AG04449 (cell line): ENCODE measurements at regions of chr6 and their contacts with region 1.

Region 1: DNA sequence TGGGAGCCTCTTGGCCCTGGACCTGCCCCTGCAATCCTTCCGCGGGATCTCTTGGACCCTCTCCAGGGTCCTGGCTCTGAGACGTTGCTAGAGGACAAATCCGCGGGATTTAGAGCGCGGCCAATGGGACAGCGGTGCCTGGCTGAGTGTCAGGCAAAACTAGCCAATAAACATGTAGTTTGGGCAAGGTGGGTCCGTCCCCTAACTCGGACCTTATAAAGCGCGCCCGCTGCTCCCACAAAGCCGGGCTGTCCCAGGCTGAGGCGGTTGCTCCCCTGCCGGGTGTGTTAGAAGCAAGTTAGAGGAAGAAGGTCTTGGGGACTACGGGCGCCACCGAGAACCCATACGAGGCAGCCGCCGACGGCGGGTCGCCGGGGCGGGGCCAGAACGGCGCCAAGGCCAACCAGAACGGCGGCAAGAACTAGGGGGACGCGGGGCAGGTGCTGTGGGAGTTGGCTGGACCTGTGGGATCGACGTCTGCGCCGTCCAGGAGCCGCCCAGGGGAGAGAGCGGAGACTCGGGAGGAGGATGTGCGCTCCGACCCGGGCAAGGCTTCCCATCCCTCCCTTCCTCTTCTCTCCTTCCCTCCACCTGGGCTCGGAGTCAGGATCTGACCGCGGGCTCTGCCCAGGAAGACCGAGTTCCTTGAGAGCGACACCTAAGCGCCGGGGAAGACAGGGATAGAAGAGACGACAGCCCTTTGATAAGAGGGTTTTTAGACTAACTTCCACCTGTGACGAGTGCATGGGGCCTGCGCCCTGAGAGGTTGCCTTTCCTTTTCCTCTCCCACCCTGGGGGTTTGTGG is 6.5 kb upstream of the TMEM14A start:
- DNase-seq: peak; percentile 65
- H3K4me3 ChIP-seq: peak overlapping the region; percentile 62
- CTCF ChIP-seq: no peak

Region 2: GRCh38 chr6:52284460-52285176 is 379.8 kb before region 1 on chr6 and contains the start of gene MCM3:
- CTCF ChIA-PET with region 1: interaction called, 25 read pairs
- POLR2A ChIA-PET with region 1: no interaction called
- DNase-seq: peak; percentile 95
- H3K4me3 ChIP-seq: peak within 1 kb of the TSS; percentile 83
- CTCF ChIP-seq: peak; percentile 4

Region 3: GRCh38 chr6:52399511-52400312 is 264.7 kb before region 1 on chr6:
- CTCF ChIA-PET with region 1: interaction called, 82 read pairs
- POLR2A ChIA-PET with region 1: no interaction called
- DNase-seq: no peak
- H3K4me3 ChIP-seq: no peak overlapping the region
- CTCF ChIP-seq: peak; percentile 76

Region 4: DNA sequence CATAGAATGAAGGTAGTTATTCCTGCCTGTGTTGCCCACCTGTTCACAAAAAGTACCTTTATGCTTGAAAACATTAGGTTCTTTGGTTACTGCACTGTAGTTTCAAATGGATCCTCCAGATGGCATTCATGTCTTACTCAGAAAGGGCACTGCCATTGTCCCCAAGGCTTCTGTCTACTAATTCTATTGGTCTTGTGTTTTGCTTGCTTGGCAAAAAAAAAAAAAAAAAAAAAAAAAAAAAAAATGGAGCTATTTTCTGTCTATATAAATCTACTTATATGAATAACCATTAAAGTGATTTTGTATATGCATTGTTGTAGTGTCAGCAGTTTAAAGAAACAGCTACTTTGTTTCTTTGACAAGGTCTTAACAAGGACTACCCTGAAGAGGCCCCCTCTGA is 256.9 kb before region 1 on chr6:
- CTCF ChIA-PET with region 1: interaction called, 141 read pairs
- POLR2A ChIA-PET with region 1: no interaction called
- DNase-seq: no peak
- H3K4me3 ChIP-seq: no peak overlapping the region
- CTCF ChIP-seq: peak; percentile 47

Region 5: GRCh38 chr6:52577022-52577777 is 87.2 kb before region 1 on chr6 and contains the start of gene TRAM2:
- CTCF ChIA-PET with region 1: interaction called, 34 read pairs
- POLR2A ChIA-PET with region 1: interaction called, 4 read pairs
- DNase-seq: no peak
- H3K4me3 ChIP-seq: peak within 1 kb of the TSS; percentile 95
- CTCF ChIP-seq: no peak

Region 6: DNA sequence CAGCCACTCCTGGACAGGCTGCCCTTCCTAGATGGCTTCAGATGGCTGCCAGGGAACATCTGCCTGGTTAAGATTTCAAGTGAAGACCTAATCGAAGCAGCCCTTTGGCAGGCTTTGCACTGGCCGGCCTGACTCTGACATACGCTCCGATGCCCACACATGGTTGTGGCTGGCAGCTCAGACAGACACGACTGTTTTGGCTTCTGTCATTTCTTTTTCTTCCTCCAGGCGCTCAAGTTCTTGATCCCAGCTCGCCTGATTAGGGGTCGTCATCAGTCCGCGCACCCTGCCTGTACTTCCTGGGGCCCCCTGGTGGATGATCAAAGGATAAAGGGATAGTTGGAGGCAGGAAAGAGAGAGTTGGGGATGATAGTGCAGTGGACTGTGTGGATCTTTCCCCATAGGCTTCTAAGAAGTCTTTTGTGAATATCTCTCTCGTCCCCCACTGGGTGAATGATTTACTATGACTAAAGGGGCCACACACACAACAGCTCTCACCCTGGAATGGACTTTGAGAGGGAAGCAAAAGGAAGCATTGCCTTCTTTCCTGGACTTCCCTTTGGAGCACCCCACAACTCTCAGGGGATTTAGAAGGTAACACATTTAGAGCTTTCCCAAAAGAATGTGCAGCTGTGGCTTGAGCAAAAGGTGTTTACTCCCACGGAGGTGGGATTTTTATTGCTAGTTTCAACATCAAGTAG is 66.1 kb before region 1 on chr6:
- CTCF ChIA-PET with region 1: interaction called, 45 read pairs
- POLR2A ChIA-PET with region 1: no interaction called
- DNase-seq: no peak
- H3K4me3 ChIP-seq: no peak overlapping the region
- CTCF ChIP-seq: peak; percentile 82

Region 7: GRCh38 chr6:52635049-52635577 is 29.3 kb before region 1 on chr6:
- CTCF ChIA-PET with region 1: interaction called, 10 read pairs
- POLR2A ChIA-PET with region 1: no interaction called
- DNase-seq: no peak
- H3K4me3 ChIP-seq: no peak overlapping the region
- CTCF ChIP-seq: no peak

Region 8: DNA sequence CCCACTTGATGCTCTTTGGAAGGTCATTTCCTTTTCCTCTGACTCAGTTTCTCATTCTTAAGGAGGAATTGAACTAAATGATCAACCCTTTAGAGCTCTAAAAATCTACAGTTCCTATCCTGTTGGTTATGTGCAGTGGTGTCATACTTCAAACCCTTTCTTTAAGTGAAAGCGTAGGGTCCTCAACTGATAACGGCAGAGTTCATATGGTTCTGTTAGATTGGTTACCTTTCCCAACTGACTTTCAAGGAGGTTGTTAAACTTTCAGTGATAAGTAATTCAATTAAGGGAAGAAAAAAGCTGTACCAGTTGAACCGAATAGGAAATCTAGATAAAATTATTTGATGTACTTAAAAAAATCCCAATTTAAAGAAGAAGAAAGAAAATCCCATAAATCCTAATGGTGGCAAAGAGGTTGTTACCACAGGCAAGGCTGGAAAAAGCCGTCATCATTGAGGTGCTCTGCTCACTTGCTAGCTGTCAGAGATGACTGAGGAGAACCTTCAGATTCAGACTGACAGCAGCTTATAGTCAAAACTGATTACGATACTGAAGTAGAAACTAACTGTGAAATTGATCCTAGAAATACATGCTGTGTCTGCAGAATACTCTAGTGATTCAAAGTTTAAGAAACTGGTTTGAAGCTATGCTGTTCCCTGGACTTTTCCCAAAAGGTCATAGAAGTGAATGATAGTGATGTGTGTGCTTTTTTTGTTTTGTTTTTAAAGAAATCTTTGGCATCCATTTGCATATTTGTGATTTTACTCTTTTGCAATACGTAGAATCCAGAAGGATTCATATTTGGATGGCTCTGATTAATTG is 22.7 kb after region 1 on chr6:
- CTCF ChIA-PET with region 1: no interaction called
- POLR2A ChIA-PET with region 1: no interaction called
- DNase-seq: no peak
- H3K4me3 ChIP-seq: no peak overlapping the region
- CTCF ChIP-seq: no peak

Region 9: GRCh38 chr6:52801188-52801841 is 136.9 kb after region 1 on chr6:
- CTCF ChIA-PET with region 1: no interaction called
- POLR2A ChIA-PET with region 1: no interaction called
- DNase-seq: no peak
- H3K4me3 ChIP-seq: no peak overlapping the region
- CTCF ChIP-seq: no peak